Naive thymus-derived CD4-positive, alpha-beta T cell (primary cell): ENCODE measurements at regions of chr12 and their contacts with region 1.

Region 1: GRCh38 chr12:75437564-75437963 is 43.0 kb upstream of the GLIPR1 start:
- DNase-seq: peak in 3 of 9 donors; percentile 9 to 39 (median 11)
- ATAC-seq: peak; percentile 89
- H3K4me3 ChIP-seq: no peak overlapping the region
- H3K4me3 Mint-ChIP-seq: no peak overlapping the region
- H3K27ac ChIP-seq: no peak overlapping the region
- H3K27ac Mint-ChIP-seq: peak overlapping the region in 1 of 9 donors; percentile 6
- H3K4me1 ChIP-seq: peaks cover 0 to 6% of the 10 kb centered on the region in 2 donors
- H3K4me1 Mint-ChIP-seq: peaks cover 0 to 14% (median 0%) of the 10 kb centered on the region in 7 donors
- H3K27me3 ChIP-seq: no peaks in the 10 kb centered on the region
- H3K27me3 Mint-ChIP-seq: peaks cover 5 to 18% (median 12%) of the 10 kb centered on the region in 5 donors

Region 2: GRCh38 chr12:75305412-75306332 is 131.9 kb before region 1 on chr12:
- CTCF ChIA-PET with region 1: no interaction called
- POLR2A ChIA-PET with region 1: no interaction called
- intact Hi-C with region 1: no loop called
- DNase-seq: no peak
- ATAC-seq: no peak
- H3K4me3 ChIP-seq: no peak overlapping the region
- H3K4me3 Mint-ChIP-seq: no peak overlapping the region
- H3K27ac ChIP-seq: no peak overlapping the region
- H3K27ac Mint-ChIP-seq: no peak overlapping the region
- H3K4me1 ChIP-seq: no peaks in the 10 kb centered on the region
- H3K4me1 Mint-ChIP-seq: no peaks in the 10 kb centered on the region
- H3K27me3 ChIP-seq: no peaks in the 10 kb centered on the region
- H3K27me3 Mint-ChIP-seq: no peaks in the 10 kb centered on the region

Region 3: GRCh38 chr12:75334384-75335030 is 103.1 kb before region 1 on chr12 and contains the start of gene GLIPR1L1:
- CTCF ChIA-PET with region 1: interaction called, 3 read pairs
- POLR2A ChIA-PET with region 1: no interaction called
- intact Hi-C with region 1: loop called in 1 of 2 experiments (anchors 1 kb)
- DNase-seq: peak; percentile 58 to 79 (median 74)
- ATAC-seq: peak; percentile 91
- H3K4me3 ChIP-seq: no peak within 1 kb of the TSS
- H3K4me3 Mint-ChIP-seq: peak within 1 kb of the TSS; percentile 18 to 80 (median 74)
- H3K27ac ChIP-seq: no peak within 1 kb of the TSS
- H3K27ac Mint-ChIP-seq: peak within 1 kb of the TSS in 1 of 9 donors; percentile 3
- H3K4me1 ChIP-seq: peaks cover 0 to 5% of the 10 kb centered on the region in 2 donors
- H3K4me1 Mint-ChIP-seq: peaks cover 11 to 29% (median 18%) of the 10 kb centered on the region in 7 donors
- H3K27me3 ChIP-seq: peaks cover 0 to 6% of the 10 kb centered on the region in 2 donors
- H3K27me3 Mint-ChIP-seq: peaks cover 16 to 56% (median 31%) of the 10 kb centered on the region in 5 donors
- total RNA-seq, gene GLIPR1L1: not detected

Region 4: DNA sequence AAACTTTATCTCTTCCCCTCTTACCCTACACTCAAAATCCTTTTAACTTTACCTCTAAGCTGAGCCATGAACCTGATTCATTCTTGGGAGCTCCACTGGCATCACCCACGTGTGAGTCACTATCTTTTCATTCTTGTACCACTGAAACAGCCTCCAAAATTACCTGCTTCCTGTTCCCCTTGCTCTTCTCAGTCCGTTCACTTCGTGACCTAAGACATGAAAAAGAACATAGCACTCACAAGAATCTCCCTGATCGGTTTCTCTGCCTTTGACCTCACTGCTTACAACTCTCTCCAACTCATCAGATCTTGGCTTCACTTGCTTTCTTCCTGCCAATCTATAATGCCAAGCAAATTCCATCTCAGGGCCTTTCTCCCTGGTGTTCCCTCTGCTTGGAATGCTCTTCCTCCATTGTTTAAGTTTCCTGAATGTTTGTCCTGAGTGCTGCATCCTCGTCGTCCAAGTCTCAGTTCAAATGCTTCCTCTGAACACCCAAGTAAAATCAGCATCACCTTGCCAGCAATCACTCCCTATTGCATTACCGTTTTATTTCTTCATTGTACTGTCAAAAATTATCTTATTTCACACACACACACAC is 52.1 kb after region 1 on chr12:
- CTCF ChIA-PET with region 1: interaction called, 8 read pairs
- POLR2A ChIA-PET with region 1: no interaction called
- intact Hi-C with region 1: loop called in 1 of 2 experiments (anchors 1 kb)
- DNase-seq: no peak
- ATAC-seq: peak; percentile 28
- H3K4me3 ChIP-seq: no peak overlapping the region
- H3K4me3 Mint-ChIP-seq: peak overlapping the region in 2 of 10 donors; percentile 4 to 7
- H3K27ac ChIP-seq: peak overlapping the region; percentile 15
- H3K27ac Mint-ChIP-seq: peak overlapping the region; percentile 15 to 86 (median 69)
- H3K4me1 ChIP-seq: peaks cover 0 to 19% of the 10 kb centered on the region in 2 donors
- H3K4me1 Mint-ChIP-seq: peaks cover 20 to 42% (median 32%) of the 10 kb centered on the region in 7 donors
- H3K27me3 ChIP-seq: no peaks in the 10 kb centered on the region
- H3K27me3 Mint-ChIP-seq: no peaks in the 10 kb centered on the region

Region 5: GRCh38 chr12:75505706-75506312 is 68.2 kb after region 1 on chr12:
- CTCF ChIA-PET with region 1: interaction called, 5 read pairs
- POLR2A ChIA-PET with region 1: no interaction called
- intact Hi-C with region 1: loop called (anchors 1 to 2 kb)
- DNase-seq: peak in 4 of 9 donors; percentile 18 to 42 (median 29)
- ATAC-seq: peak; percentile 75
- H3K4me3 ChIP-seq: no peak overlapping the region
- H3K4me3 Mint-ChIP-seq: no peak overlapping the region
- H3K27ac ChIP-seq: no peak overlapping the region
- H3K27ac Mint-ChIP-seq: peak overlapping the region in 4 of 9 donors; percentile 0 to 71 (median 5)
- H3K4me1 ChIP-seq: peaks cover 12 to 13% of the 10 kb centered on the region in 2 donors
- H3K4me1 Mint-ChIP-seq: peaks cover 14 to 38% (median 32%) of the 10 kb centered on the region in 7 donors
- H3K27me3 ChIP-seq: no peaks in the 10 kb centered on the region
- H3K27me3 Mint-ChIP-seq: no peaks in the 10 kb centered on the region